ENCODE measurements at regions of chr4 and their contacts with region 1.

Region 1: DNA sequence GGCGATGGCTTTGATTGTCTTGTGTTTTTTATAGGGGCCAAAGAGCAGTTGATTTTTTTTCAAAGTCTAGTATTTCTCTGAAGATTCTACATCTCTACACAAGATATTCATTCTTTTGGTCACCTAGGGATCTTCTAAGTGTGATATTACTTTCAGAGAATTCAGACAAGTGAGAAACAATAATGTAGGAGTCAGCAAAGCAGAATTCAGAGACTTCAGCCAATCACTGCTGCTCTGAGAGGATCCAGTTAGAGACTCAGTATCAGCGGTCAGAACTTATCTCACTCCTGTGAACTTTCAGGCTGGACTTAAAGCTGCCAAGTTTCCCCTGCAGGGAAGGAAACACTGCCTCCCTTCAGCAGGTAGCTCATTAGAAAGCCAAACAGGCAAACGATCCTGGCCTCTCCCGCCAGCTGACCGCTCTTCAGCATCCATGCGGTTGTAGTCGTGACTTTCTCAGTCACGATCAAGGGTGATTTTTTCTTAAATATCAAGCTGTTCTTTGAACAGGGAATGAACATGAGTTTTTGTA is 59.2 kb downstream of the NSUN7 start:
- DNase-seq: no peak
- H3K4me3 ChIP-seq: no peak overlapping the region
- H3K27ac ChIP-seq: no peak overlapping the region
- H3K4me1 ChIP-seq: no peaks in the 10 kb centered on the region
- H3K27me3 ChIP-seq: no peaks in the 10 kb centered on the region
- CTCF ChIP-seq: no peak

Region 2: GRCh38 chr4:40693946-40694455 is 115.0 kb before region 1 on chr4:
- intact Hi-C with region 1: no loop called
- DNase-seq: no peak
- H3K4me3 ChIP-seq: no peak overlapping the region
- H3K27ac ChIP-seq: no peak overlapping the region
- H3K4me1 ChIP-seq: no peaks in the 10 kb centered on the region
- H3K27me3 ChIP-seq: no peaks in the 10 kb centered on the region
- CTCF ChIP-seq: no peak

Region 3: GRCh38 chr4:40874901-40875300 is 65.9 kb after region 1 on chr4:
- intact Hi-C with region 1: loop called (anchors 5 kb)
- DNase-seq: no peak
- H3K4me3 ChIP-seq: no peak overlapping the region
- H3K27ac ChIP-seq: no peak overlapping the region
- H3K4me1 ChIP-seq: no peaks in the 10 kb centered on the region
- H3K27me3 ChIP-seq: no peaks in the 10 kb centered on the region
- CTCF ChIP-seq: no peak